Activated naive CD4-positive, alpha-beta T cell treated with anti-CD3 and anti-CD28 coated beads, Interleukin-2, amount 10 ng/mL, durations not matched to agents 7 days and 5 days (primary cell): ENCODE measurements at regions of chr9 and their contacts with region 1.

Region 1: GRCh38 chr9:74773886-74774479 is 113.7 kb downstream of the TRPM6 start:
- DNase-seq: peak; percentile 82
- H3K4me3 Mint-ChIP-seq: no peak overlapping the region
- H3K27ac Mint-ChIP-seq: no peak overlapping the region
- H3K4me1 Mint-ChIP-seq: peaks cover 2% of the 10 kb centered on the region
- H3K27me3 Mint-ChIP-seq: peaks cover 8% of the 10 kb centered on the region

Region 2: GRCh38 chr9:74784506-74784905 is 10.5 kb after region 1 on chr9:
- CTCF ChIA-PET with region 1: interaction called, 10 read pairs
- DNase-seq: no peak
- H3K4me3 Mint-ChIP-seq: no peak overlapping the region
- H3K27ac Mint-ChIP-seq: no peak overlapping the region
- H3K4me1 Mint-ChIP-seq: no peaks in the 10 kb centered on the region
- H3K27me3 Mint-ChIP-seq: peaks cover 10% of the 10 kb centered on the region

Region 3: GRCh38 chr9:74952281-74953151 is 178.5 kb after region 1 on chr9 and contains the start of gene C9orf40:
- CTCF ChIA-PET with region 1: interaction called, 13 read pairs
- DNase-seq: peak; percentile 94
- H3K4me3 Mint-ChIP-seq: peak within 1 kb of the TSS; percentile 98
- H3K27ac Mint-ChIP-seq: peak within 1 kb of the TSS; percentile 97
- H3K4me1 Mint-ChIP-seq: peaks cover 43% of the 10 kb centered on the region
- H3K27me3 Mint-ChIP-seq: no peaks in the 10 kb centered on the region

Region 4: DNA sequence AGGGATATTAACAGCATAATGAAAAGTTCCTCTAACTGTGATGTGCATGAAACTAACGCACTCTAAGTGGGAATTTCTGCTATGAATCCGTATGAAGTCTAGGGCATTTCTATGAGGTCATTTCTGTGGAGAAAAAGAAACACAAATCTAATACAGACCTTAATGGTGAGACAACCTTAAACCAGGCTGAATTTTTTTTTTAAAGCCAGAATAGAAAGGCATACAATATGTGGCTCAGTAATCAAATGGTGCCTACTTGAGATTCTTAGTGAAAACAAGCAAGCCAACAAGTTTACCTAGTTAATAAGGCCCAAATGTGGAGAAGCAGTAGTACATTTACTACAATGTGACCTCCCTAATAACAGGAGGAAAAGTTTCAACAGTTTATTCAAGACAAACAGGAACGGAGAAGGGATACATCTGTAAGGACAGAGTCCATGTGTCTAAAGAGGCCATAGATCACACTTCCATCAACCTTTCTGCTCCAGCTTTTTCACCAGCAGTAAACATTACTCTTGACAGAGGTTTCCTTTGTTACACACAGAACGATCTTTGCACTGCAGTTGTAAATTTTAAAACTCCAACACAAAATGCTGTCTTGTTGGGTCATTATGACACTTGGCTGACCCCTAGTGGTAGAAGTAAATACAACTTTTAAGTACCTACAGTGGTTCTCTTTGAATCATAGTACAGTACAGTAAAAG is 227.9 kb after region 1 on chr9:
- CTCF ChIA-PET with region 1: interaction called, 121 read pairs
- DNase-seq: no peak
- H3K4me3 Mint-ChIP-seq: no peak overlapping the region
- H3K27ac Mint-ChIP-seq: no peak overlapping the region
- H3K4me1 Mint-ChIP-seq: no peaks in the 10 kb centered on the region
- H3K27me3 Mint-ChIP-seq: no peaks in the 10 kb centered on the region

Region 5: GRCh38 chr9:75064307-75065025 is 290.5 kb after region 1 on chr9:
- CTCF ChIA-PET with region 1: interaction called, 10 read pairs
- DNase-seq: no peak
- H3K4me3 Mint-ChIP-seq: no peak overlapping the region
- H3K27ac Mint-ChIP-seq: no peak overlapping the region
- H3K4me1 Mint-ChIP-seq: peaks cover 9% of the 10 kb centered on the region
- H3K27me3 Mint-ChIP-seq: no peaks in the 10 kb centered on the region

Region 6: DNA sequence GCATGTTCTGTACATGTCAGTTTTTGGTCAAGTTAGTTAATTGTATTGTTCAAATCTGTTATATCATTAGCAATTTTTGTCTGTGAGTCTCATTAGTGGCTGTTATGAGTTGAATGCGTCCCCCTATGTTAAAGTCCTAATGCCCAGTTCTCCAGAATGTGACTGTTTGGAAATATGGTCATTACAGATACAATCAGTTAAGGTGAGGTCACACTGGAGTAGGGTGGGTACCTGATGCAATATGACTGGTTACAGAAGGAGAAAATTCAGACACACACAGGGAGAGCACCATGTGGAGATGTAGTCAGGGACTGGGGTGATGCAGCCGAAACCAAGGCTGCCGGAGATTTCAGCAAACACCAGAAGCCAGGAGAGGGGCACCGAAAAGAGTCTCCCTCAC is 298.9 kb after region 1 on chr9:
- CTCF ChIA-PET with region 1: interaction called, 74 read pairs
- DNase-seq: no peak
- H3K4me3 Mint-ChIP-seq: no peak overlapping the region
- H3K27ac Mint-ChIP-seq: no peak overlapping the region
- H3K4me1 Mint-ChIP-seq: peaks cover 29% of the 10 kb centered on the region
- H3K27me3 Mint-ChIP-seq: no peaks in the 10 kb centered on the region

Region 7: DNA sequence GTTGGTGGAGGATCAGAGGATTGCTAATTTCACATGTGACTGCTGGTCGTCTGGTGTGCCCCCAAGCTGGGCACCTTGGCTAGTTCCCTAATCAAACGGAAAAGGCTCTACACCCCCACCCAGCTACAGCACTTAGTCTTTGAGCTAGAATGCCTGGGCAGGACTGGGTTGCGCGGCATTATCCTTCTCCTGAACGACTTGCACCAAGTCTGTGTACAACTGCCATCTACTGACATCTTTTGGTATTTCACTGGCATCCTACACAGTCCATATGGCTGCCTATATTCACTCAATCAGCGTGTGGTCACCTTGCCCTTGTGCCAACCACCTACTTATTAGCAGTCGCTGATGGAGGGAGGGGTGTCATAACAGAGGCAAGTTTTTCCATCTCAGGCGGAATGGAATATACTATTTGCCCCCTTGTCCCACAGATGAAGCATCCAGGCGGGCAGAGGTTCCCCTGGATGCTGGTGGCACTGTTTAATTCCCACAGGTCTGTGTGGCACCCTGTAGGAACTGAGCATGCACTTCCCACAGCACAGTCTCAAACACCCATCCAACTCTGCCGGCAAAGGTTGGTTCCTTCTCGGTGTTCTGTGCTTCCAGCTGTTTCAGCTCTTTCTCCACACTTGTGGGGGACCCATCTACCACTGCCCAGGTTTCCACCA is 464.5 kb after region 1 on chr9:
- CTCF ChIA-PET with region 1: interaction called, 14 read pairs
- DNase-seq: peak; percentile 54
- H3K4me3 Mint-ChIP-seq: no peak overlapping the region
- H3K27ac Mint-ChIP-seq: no peak overlapping the region
- H3K4me1 Mint-ChIP-seq: no peaks in the 10 kb centered on the region
- H3K27me3 Mint-ChIP-seq: peaks cover 4% of the 10 kb centered on the region